ENCODE measurements at regions of chr1 and their contacts with region 1.

Region 1: DNA sequence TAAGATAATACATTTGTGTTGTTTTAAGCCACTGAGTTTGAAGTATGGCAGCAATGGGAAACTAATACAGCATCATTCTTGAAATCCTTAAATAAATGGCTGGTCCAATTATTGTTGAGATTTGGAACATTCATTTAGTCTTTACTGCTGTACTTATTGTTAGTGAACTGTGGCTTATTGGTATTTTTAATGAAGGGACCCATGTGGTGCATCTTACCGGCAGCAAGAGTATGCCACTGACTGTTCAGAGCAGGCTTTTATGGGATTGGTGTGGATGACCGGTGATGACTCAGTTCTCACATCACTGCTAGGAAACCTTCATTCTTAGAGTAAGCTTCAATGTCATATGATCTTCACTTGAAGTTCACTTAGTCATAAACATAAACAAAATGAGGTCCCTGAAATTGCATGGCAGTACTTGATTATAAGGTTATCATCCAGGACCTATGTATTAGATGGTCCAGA is 31.5 kb downstream of the PRKAA2 start:
- DNase-seq: no peak
- H3K4me3 ChIP-seq: no peak overlapping the region
- H3K27ac ChIP-seq: no peak overlapping the region
- H3K4me1 ChIP-seq: no peaks in the 10 kb centered on the region
- H3K27me3 ChIP-seq: peaks cover 9% of the 10 kb centered on the region
- CTCF ChIP-seq: no peak

Region 2: DNA sequence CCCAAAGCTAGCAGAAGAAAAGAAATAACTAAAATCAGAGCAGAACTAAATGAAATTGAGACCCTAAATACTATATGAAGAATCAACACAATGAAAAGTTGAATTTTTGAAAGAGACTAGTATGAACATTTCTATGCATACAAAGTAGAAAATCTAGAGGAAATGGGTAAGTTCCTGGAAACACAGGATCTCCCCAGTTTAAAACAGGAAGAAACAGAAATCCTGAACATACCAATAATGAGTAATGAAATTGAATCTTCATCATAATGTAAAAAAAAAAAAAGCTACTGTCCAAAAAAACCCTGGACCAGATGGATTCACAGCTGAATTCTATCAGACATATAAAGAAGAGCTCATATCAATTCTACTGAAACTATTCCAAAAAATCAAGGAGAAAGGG is 330.8 kb before region 1 on chr1:
- CTCF ChIA-PET with region 1: no interaction called
- POLR2A ChIA-PET with region 1: no interaction called
- intact Hi-C with region 1: no loop called
- DNase-seq: no peak
- H3K4me3 ChIP-seq: no peak overlapping the region
- H3K27ac ChIP-seq: no peak overlapping the region
- H3K4me1 ChIP-seq: no peaks in the 10 kb centered on the region
- H3K27me3 ChIP-seq: no peaks in the 10 kb centered on the region
- CTCF ChIP-seq: no peak

Region 3: GRCh38 chr1:56654126-56654923 is 22.3 kb before region 1 on chr1:
- CTCF ChIA-PET with region 1: no interaction called
- POLR2A ChIA-PET with region 1: no interaction called
- intact Hi-C with region 1: loop called (anchors 1 kb)
- DNase-seq: peak; percentile 7
- H3K4me3 ChIP-seq: no peak overlapping the region
- H3K27ac ChIP-seq: no peak overlapping the region
- H3K4me1 ChIP-seq: no peaks in the 10 kb centered on the region
- H3K27me3 ChIP-seq: peaks cover 6% of the 10 kb centered on the region
- CTCF ChIP-seq: no peak

Region 4: GRCh38 chr1:56666112-56666608 is 10.4 kb before region 1 on chr1:
- CTCF ChIA-PET with region 1: no interaction called
- POLR2A ChIA-PET with region 1: no interaction called
- intact Hi-C with region 1: no loop called
- DNase-seq: no peak
- H3K4me3 ChIP-seq: no peak overlapping the region
- H3K27ac ChIP-seq: no peak overlapping the region
- H3K4me1 ChIP-seq: no peaks in the 10 kb centered on the region
- H3K27me3 ChIP-seq: peaks cover 6% of the 10 kb centered on the region
- CTCF ChIP-seq: no peak